ENCODE measurements at regions of chr7 and their contacts with region 1.

Region 1: GRCh38 chr7:155490697-155491628 is 33.0 kb downstream of the EN2 start:
- DNase-seq: no peak
- ATAC-seq: peak; percentile 96
- H3K4me3 Mint-ChIP-seq: peak overlapping the region; percentile 89
- H3K27ac Mint-ChIP-seq: peak overlapping the region; percentile 91
- H3K4me1 Mint-ChIP-seq: peaks cover 25% of the 10 kb centered on the region
- H3K27me3 Mint-ChIP-seq: peaks cover 7% of the 10 kb centered on the region
- CTCF ChIP-seq: no peak

Region 2: GRCh38 chr7:154789404-154789803 is 701.6 kb before region 1 on chr7:
- CTCF ChIA-PET with region 1: no interaction called
- POLR2A ChIA-PET with region 1: no interaction called
- intact Hi-C with region 1: no loop called
- DNase-seq: no peak
- ATAC-seq: no peak
- H3K4me3 Mint-ChIP-seq: no peak overlapping the region
- H3K27ac Mint-ChIP-seq: no peak overlapping the region
- H3K4me1 Mint-ChIP-seq: no peaks in the 10 kb centered on the region
- H3K27me3 Mint-ChIP-seq: peaks cover 6% of the 10 kb centered on the region
- CTCF ChIP-seq: no peak

Region 3: DNA sequence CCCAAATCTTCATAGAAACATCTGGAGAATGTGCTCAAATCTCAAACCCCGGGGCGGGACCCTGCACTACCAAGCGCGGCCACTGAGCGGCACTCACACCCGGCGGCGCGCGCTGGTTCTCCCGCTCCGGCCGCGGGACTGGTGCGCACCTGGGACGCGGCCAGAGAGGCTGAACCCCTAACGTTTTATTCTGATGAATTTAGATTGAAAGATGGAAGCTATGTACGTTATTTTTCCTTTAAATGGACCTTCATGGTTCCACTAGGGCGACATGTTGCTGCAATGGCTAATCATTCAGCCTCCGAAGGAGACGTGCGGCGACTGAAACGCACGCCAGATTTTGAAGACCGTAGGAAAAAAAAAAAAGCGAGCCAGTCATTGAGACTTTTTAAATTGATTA is 300.3 kb before region 1 on chr7:
- CTCF ChIA-PET with region 1: no interaction called
- POLR2A ChIA-PET with region 1: no interaction called
- intact Hi-C with region 1: loop called (anchors 10 kb)
- DNase-seq: peak; percentile 70
- ATAC-seq: peak; percentile 94
- H3K4me3 Mint-ChIP-seq: no peak overlapping the region
- H3K27ac Mint-ChIP-seq: no peak overlapping the region
- H3K4me1 Mint-ChIP-seq: peaks cover 8% of the 10 kb centered on the region
- H3K27me3 Mint-ChIP-seq: peaks cover 7% of the 10 kb centered on the region
- CTCF ChIP-seq: no peak

Region 4: GRCh38 chr7:155882596-155882995 is 391.6 kb after region 1 on chr7:
- CTCF ChIA-PET with region 1: no interaction called
- POLR2A ChIA-PET with region 1: no interaction called
- intact Hi-C with region 1: no loop called
- DNase-seq: no peak
- ATAC-seq: no peak
- H3K4me3 Mint-ChIP-seq: no peak overlapping the region
- H3K27ac Mint-ChIP-seq: no peak overlapping the region
- H3K4me1 Mint-ChIP-seq: no peaks in the 10 kb centered on the region
- H3K27me3 Mint-ChIP-seq: no peaks in the 10 kb centered on the region
- CTCF ChIP-seq: no peak

Measured in activated B cell treated with CpG ODN at 0.5 μM for 24 hours (primary cell).